CD4-positive, alpha-beta T cell (primary cell): ENCODE measurements at regions of chr3 and their contacts with region 1.

Region 1: GRCh38 chr3:33652736-33653135 is 65.3 kb downstream of the CLASP2 start:
- DNase-seq: no peak
- ATAC-seq: no peak
- H3K4me3 ChIP-seq: no peak overlapping the region
- H3K4me3 Mint-ChIP-seq: no peak overlapping the region
- H3K27ac ChIP-seq: no peak overlapping the region
- H3K27ac Mint-ChIP-seq: no peak overlapping the region
- H3K4me1 ChIP-seq: no peaks in the 10 kb centered on the region
- H3K4me1 Mint-ChIP-seq: peaks cover 28% of the 10 kb centered on the region
- H3K27me3 ChIP-seq: no peaks in the 10 kb centered on the region
- H3K27me3 Mint-ChIP-seq: no peaks in the 10 kb centered on the region
- CTCF ChIP-seq: no peak

Region 2: GRCh38 chr3:33711100-33711499 is 58.4 kb after region 1 on chr3:
- CTCF ChIA-PET with region 1: no interaction called
- POLR2A ChIA-PET with region 1: no interaction called
- intact Hi-C with region 1: loop called in 1 of 2 experiments (anchors 5 kb)
- DNase-seq: no peak
- ATAC-seq: no peak
- H3K4me3 ChIP-seq: no peak overlapping the region
- H3K4me3 Mint-ChIP-seq: no peak overlapping the region
- H3K27ac ChIP-seq: no peak overlapping the region
- H3K27ac Mint-ChIP-seq: no peak overlapping the region
- H3K4me1 ChIP-seq: peaks cover 3% of the 10 kb centered on the region
- H3K4me1 Mint-ChIP-seq: peaks cover 43% of the 10 kb centered on the region
- H3K27me3 ChIP-seq: no peaks in the 10 kb centered on the region
- H3K27me3 Mint-ChIP-seq: no peaks in the 10 kb centered on the region
- CTCF ChIP-seq: no peak